ENCODE measurements at regions of chr2 and their contacts with region 1.

Region 1: DNA sequence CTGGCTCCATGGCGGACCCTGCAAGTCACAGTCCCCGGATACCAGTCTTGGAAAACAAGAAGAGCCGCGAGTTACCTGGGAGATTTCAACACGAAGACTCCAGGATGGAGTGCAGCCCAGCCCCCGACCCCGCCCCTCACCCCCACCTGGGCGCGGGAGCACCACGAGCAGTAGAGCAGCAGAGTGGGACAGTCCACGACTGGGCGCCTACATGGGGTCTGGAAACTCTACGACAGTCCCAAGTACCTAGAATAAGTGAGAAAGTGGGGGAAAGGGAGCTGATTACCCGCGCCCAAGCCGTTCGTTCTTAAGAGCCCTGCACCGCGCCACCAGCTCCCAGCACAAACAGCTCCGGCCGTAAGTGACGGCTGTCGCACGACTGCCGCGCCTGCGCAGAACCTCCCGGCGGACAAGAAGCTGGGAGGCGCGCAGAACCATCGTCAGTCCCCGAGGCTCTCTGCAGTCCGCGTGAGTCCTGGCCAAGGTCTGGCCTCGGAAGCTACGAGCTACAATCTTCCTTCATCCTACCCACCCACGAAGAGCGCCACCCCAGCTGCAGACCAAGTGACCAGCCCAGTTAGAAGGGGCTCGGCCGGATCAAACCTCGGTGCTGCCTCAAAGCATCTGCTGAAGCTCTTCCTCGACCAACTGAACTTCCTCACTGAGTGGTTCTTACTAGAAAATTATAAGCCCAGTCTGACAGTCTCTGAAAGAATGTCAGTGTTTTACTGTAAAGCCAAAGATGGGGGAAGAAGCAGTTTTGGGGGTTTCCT is at the start of gene DPY30:
- DNase-seq: peak; percentile 83 to 97
- ATAC-seq: peak; percentile 95 to 97
- H3K4me3 ChIP-seq: peak within 1 kb of the TSS; percentile 88
- H3K27ac ChIP-seq: peak within 1 kb of the TSS; percentile 89
- H3K4me1 ChIP-seq: peaks cover 6% of the 10 kb centered on the region
- CTCF ChIP-seq: no peak
- EP300 ChIP-seq: no peak
- POLR2A ChIP-seq: peak; percentile 100
- RAD21 ChIP-seq: no peak; a peak in 1 of 5 replicates
- polyA plus RNA-seq, gene DPY30: 176 and 239 TPM in 2 replicates

Region 2: DNA sequence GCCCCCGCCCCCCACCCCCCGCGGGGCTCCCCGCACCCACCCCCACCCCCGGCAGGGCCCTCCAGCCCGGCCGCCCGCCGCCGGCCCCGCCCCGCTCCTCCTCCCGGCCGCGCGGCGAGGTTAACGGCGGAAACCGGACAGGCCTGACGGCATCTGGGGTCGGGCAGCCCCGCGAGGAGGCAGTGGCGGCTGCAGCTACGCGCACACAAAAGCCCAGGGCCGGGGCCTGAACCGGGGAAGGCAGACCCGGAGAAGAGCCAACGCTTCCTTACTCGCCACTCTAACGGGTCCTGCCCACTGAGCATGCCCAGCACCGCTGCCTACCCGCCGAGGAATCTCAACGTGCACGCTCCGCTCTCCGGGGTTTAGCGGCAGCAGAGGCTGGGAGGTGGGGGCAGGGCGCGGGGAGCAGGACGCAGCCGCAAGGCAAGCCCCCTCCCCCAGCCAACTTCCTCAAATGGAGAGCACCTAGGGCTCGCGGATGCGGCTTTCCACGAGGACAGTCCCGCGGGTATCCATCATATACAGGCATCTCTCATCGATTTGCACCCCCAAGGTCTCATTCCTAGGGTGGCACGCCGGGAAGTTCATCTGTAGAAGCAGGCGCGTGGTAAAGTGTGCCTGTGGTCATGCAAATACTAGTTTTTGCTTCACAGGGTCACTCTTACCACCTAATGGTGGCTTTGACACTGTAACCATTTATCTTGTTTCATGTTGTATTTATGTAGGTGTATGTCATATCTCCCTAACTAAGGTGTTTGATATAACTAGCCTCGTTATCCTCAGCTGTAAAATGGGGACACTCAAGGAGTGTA is 28.8 kb before region 1 on chr2 and contains the start of gene MEMO1:
- CTCF ChIA-PET with region 1: no interaction called
- POLR2A ChIA-PET with region 1: interaction called, 12 read pairs
- DNase-seq: peak; percentile 97 to 98
- ATAC-seq: peak; percentile 78 to 84
- H3K4me3 ChIP-seq: peak within 1 kb of the TSS; percentile 96
- H3K27ac ChIP-seq: peak within 1 kb of the TSS; percentile 97 to 99
- H3K4me1 ChIP-seq: peaks cover 37% of the 10 kb centered on the region
- CTCF ChIP-seq: no peak
- EP300 ChIP-seq: peak in 1 of 2 experiments; percentile 5; a peak in 1 of 5 replicates
- POLR2A ChIP-seq: peak; percentile 79
- RAD21 ChIP-seq: peak; percentile 19 to 44; a peak in 4 of 5 replicates
- polyA plus RNA-seq, gene MEMO1: 72.9 and 87.0 TPM in 2 replicates

Region 3: GRCh38 chr2:32058130-32058529 is 18.5 kb after region 1 on chr2:
- CTCF ChIA-PET with region 1: interaction called, 14 read pairs
- POLR2A ChIA-PET with region 1: interaction called, 67 read pairs
- DNase-seq: peak in 1 of 2 experiments; percentile 56
- ATAC-seq: peak in 1 of 2 experiments; percentile 26; a peak in 2 of 6 replicates
- H3K4me3 ChIP-seq: no peak overlapping the region
- H3K27ac ChIP-seq: peak overlapping the region in 1 of 2 experiments; percentile 55; a peak in 3 of 6 replicates
- H3K4me1 ChIP-seq: peaks cover 8% of the 10 kb centered on the region
- CTCF ChIP-seq: no peak
- EP300 ChIP-seq: no peak
- POLR2A ChIP-seq: no peak
- RAD21 ChIP-seq: no peak

Region 4: DNA sequence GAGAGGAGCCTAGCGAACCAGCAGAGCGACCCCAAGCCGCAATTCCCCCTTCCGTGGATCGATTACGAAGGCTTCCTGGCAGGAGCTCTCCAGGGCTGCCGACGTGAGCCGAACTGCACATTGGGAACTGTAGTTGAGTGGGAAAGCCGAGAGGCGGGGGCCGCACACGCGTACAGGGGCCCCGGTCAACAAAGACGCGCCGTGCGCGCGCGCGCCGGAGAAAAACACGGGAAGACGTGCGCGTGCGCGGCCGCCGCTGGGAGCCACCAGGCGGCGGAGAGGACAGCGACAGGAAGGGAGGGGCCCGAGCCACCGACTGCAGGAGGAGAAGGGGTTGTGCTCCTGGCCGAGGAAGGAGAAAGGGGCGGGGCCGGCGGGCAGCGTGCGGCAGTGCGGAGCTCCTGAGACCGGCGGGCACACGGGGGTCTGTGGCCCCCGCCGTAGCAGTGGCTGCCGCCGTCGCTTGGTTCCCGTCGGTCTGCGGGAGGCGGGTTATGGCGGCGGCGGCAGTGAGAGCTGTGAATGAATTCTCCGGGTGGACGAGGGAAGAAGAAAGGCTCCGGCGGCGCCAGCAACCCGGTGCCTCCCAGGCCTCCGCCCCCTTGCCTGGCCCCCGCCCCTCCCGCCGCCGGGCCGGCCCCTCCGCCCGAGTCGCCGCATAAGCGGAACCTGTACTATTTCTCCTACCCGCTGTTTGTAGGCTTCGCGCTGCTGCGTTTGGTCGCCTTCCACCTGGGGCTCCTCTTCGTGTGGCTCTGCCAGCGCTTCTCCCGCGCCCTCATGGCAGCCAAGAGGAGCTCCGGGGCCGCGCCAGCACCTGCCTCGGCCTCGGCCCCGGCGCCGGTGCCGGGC is 23.9 kb after region 1 on chr2 and contains the start of gene SPAST:
- CTCF ChIA-PET with region 1: interaction called, 14 read pairs
- POLR2A ChIA-PET with region 1: interaction called, 67 read pairs
- DNase-seq: peak; percentile 99 to 100
- ATAC-seq: peak; percentile 96 to 98
- H3K4me3 ChIP-seq: peak within 1 kb of the TSS; percentile 76
- H3K27ac ChIP-seq: peak within 1 kb of the TSS; percentile 85 to 92
- H3K4me1 ChIP-seq: peaks cover 18% of the 10 kb centered on the region
- CTCF ChIP-seq: peak; percentile 32
- EP300 ChIP-seq: no peak
- POLR2A ChIP-seq: peak; percentile 81
- RAD21 ChIP-seq: peak; percentile 21 to 22; a peak in 3 of 5 replicates
- polyA plus RNA-seq, gene SPAST: 31.1 and 36.3 TPM in 2 replicates

Region 5: GRCh38 chr2:32166115-32166574 is 126.5 kb after region 1 on chr2:
- CTCF ChIA-PET with region 1: no interaction called
- POLR2A ChIA-PET with region 1: interaction called, 29 read pairs
- DNase-seq: no peak
- ATAC-seq: no peak
- H3K4me3 ChIP-seq: peak overlapping the region; percentile 75
- H3K27ac ChIP-seq: peak overlapping the region; percentile 82 to 89
- H3K4me1 ChIP-seq: peaks cover 8% of the 10 kb centered on the region
- CTCF ChIP-seq: no peak
- EP300 ChIP-seq: no peak
- POLR2A ChIP-seq: no peak
- RAD21 ChIP-seq: no peak

Region 6: DNA sequence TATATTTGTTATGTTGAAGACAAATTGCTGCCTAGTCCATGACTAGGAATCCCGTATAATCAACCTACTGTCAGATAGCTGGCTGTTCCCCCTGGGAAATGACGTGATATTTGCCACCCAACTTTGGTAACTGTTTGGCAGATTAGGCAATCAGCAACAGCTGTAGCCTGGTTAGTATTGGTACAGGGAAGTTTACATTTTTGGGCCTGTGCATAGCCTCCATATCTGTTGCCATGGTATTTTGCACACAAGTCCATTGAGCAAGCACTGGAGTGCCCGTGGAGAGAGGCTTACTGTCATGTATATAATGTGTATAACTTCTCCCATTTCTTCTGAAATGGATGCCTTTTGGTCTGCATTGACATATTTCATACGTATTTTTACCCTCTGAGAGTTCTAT is 344.9 kb after region 1 on chr2:
- CTCF ChIA-PET with region 1: no interaction called
- POLR2A ChIA-PET with region 1: no interaction called
- DNase-seq: no peak
- ATAC-seq: peak; percentile 21 to 28; a peak in 1 of 6 replicates
- H3K4me3 ChIP-seq: no peak overlapping the region
- H3K27ac ChIP-seq: no peak overlapping the region
- H3K4me1 ChIP-seq: no peaks in the 10 kb centered on the region
- CTCF ChIP-seq: no peak
- EP300 ChIP-seq: no peak
- POLR2A ChIP-seq: no peak
- RAD21 ChIP-seq: no peak

Region 7: GRCh38 chr2:33000986-33001385 is 961.4 kb after region 1 on chr2:
- CTCF ChIA-PET with region 1: no interaction called
- POLR2A ChIA-PET with region 1: no interaction called
- DNase-seq: no peak
- ATAC-seq: no peak
- H3K4me3 ChIP-seq: no peak overlapping the region
- H3K27ac ChIP-seq: no peak overlapping the region
- H3K4me1 ChIP-seq: peaks cover 10% of the 10 kb centered on the region
- CTCF ChIP-seq: no peak
- EP300 ChIP-seq: no peak
- POLR2A ChIP-seq: no peak
- RAD21 ChIP-seq: no peak